Caco-2 (cell line): ENCODE measurements at regions of chr1 and their contacts with region 1.

Region 1: GRCh38 chr1:85580872-85581801 is 576 bp downstream of the CCN1 start:
- DNase-seq: peak; percentile 69 to 81
- H3K4me3 ChIP-seq: peak overlapping the region; percentile 65
- H3K4me3 Mint-ChIP-seq: peak overlapping the region; percentile 83
- H3K27ac Mint-ChIP-seq: peak overlapping the region; percentile 92
- H3K4me1 ChIP-seq: peaks cover 45% of the 10 kb centered on the region
- H3K4me1 Mint-ChIP-seq: peaks cover 28% of the 10 kb centered on the region
- H3K27me3 ChIP-seq: no peaks in the 10 kb centered on the region
- H3K27me3 Mint-ChIP-seq: no peaks in the 10 kb centered on the region
- CTCF ChIP-seq: peak; percentile 46 to 72

Region 2: GRCh38 chr1:85448358-85448757 is 132.8 kb before region 1 on chr1:
- CTCF ChIA-PET with region 1: no interaction called
- POLR2A ChIA-PET with region 1: no interaction called
- intact Hi-C with region 1: no loop called
- DNase-seq: no peak
- H3K4me3 ChIP-seq: no peak overlapping the region
- H3K4me3 Mint-ChIP-seq: no peak overlapping the region
- H3K27ac Mint-ChIP-seq: peak overlapping the region; percentile 18
- H3K4me1 ChIP-seq: no peaks in the 10 kb centered on the region
- H3K4me1 Mint-ChIP-seq: no peaks in the 10 kb centered on the region
- H3K27me3 ChIP-seq: no peaks in the 10 kb centered on the region
- H3K27me3 Mint-ChIP-seq: no peaks in the 10 kb centered on the region
- CTCF ChIP-seq: no peak

Region 3: DNA sequence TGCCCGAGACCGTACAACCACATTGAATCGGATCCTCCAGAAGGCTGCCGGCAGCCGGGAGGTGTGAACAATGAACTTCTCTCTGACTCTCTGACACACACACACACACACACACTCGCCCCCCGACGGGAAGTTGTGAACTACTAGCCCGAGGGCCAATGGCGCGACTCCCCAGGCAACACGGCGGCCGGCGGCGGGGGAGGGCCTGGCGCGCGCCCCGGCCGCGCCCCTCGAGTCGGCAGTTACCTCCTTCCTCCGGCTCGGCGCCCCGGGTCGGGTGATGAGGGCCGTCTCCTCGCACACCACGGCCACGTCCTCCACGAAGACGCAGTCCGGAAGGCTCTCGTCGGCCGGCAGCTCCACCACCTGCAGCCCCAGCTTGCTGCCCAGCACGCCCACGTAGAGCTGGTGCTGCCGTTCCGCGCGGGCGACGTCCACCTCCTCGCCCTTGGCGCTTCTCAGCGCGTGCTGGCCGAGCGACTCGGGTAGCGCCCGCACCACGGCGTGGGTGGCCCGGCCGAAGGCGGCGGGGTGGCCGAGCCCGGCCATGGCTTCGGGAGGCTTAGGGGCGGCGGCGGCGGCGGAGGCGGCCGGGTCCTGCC is 116.5 kb before region 1 on chr1:
- CTCF ChIA-PET with region 1: interaction called, 3 read pairs
- POLR2A ChIA-PET with region 1: interaction called, 6 read pairs
- intact Hi-C with region 1: loop called (anchors 2 kb)
- DNase-seq: peak; percentile 59 to 66
- H3K4me3 ChIP-seq: peak overlapping the region; percentile 88
- H3K4me3 Mint-ChIP-seq: peak overlapping the region; percentile 88
- H3K27ac Mint-ChIP-seq: peak overlapping the region; percentile 84
- H3K4me1 ChIP-seq: peaks cover 38% of the 10 kb centered on the region
- H3K4me1 Mint-ChIP-seq: peaks cover 24% of the 10 kb centered on the region
- H3K27me3 ChIP-seq: no peaks in the 10 kb centered on the region; the same call in 1 of the 2 replicates
- H3K27me3 Mint-ChIP-seq: no peaks in the 10 kb centered on the region
- CTCF ChIP-seq: no peak

Region 4: GRCh38 chr1:85544689-85545215 is 36.4 kb before region 1 on chr1:
- CTCF ChIA-PET with region 1: interaction called, 3 read pairs
- POLR2A ChIA-PET with region 1: interaction called, 5 read pairs
- intact Hi-C with region 1: loop called (anchors 1 kb)
- DNase-seq: peak; percentile 62 to 67
- H3K4me3 ChIP-seq: no peak overlapping the region
- H3K4me3 Mint-ChIP-seq: peak overlapping the region; percentile 50
- H3K27ac Mint-ChIP-seq: peak overlapping the region; percentile 94
- H3K4me1 ChIP-seq: peaks cover 28% of the 10 kb centered on the region
- H3K4me1 Mint-ChIP-seq: peaks cover 15% of the 10 kb centered on the region
- H3K27me3 ChIP-seq: no peaks in the 10 kb centered on the region
- H3K27me3 Mint-ChIP-seq: no peaks in the 10 kb centered on the region
- CTCF ChIP-seq: no peak

Region 5: DNA sequence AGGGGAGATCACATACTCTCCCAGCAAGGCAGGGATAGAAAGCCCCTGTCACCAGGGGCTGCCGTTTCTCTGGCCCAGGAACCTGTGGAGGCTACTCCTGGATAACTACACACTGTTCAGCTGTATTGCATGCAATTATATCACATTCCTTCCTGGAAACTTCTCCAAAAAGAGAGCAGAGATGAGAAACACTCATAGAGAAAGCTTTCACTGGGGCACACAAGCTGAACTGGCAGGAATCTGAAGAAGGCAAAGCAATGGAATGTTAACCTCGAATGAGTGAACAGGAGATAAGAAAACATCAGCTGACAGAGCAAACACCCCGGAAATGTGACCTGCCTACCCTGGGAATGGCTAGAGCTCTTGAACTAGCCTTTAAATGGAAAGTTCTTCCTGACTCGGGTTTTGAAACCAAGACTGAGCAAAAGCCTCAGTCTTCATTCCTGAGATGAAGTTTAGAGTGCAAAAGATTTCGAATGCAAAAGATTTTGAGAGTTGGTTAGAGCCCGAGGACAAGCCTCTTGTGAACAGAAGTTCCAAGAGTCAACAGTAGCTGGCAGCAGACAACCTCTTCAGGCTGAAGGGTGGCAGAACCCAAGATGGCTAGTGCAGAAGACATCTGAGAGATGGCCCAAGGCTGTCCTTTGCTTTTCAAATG is 31.7 kb after region 1 on chr1:
- CTCF ChIA-PET with region 1: interaction called, 11 read pairs
- POLR2A ChIA-PET with region 1: interaction called, 17 read pairs
- intact Hi-C with region 1: loop called (anchors 1 kb)
- DNase-seq: peak; percentile 60 to 69
- H3K4me3 ChIP-seq: no peak overlapping the region
- H3K4me3 Mint-ChIP-seq: peak overlapping the region; percentile 70
- H3K27ac Mint-ChIP-seq: peak overlapping the region; percentile 96
- H3K4me1 ChIP-seq: peaks cover 47% of the 10 kb centered on the region
- H3K4me1 Mint-ChIP-seq: peaks cover 47% of the 10 kb centered on the region
- H3K27me3 ChIP-seq: no peaks in the 10 kb centered on the region
- H3K27me3 Mint-ChIP-seq: no peaks in the 10 kb centered on the region
- CTCF ChIP-seq: peak; percentile 35 to 41

Region 6: DNA sequence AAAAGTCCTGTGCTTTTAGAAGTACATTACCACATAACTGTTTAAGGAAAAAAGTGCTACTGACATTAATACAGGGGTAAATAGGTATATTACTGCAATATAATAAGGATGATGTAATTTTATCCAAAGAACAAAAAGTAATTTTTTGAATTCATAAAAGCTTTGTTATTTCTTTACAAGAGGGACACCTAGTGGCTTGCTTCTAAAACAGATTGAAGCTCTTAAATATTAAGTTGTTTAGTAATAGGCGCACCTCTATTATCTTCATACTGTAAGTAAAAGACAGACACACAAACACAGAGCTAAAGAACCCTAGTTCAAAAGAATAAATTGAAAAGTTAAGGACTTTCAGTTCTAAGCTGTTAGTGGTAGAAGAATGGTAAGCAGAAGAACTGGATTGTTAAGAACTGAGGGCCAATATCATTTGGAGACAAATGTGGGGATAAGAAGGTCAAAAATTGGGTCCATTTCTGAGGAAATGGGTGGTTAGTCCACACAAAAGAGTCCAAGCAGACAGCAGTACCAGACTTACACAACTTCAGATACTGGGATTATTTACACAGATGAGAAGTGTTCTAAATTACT is 111.7 kb after region 1 on chr1:
- CTCF ChIA-PET with region 1: interaction called, 4 read pairs
- POLR2A ChIA-PET with region 1: no interaction called
- intact Hi-C with region 1: loop called (anchors 5 kb)
- DNase-seq: no peak
- H3K4me3 ChIP-seq: no peak overlapping the region
- H3K4me3 Mint-ChIP-seq: no peak overlapping the region
- H3K27ac Mint-ChIP-seq: no peak overlapping the region
- H3K4me1 ChIP-seq: no peaks in the 10 kb centered on the region
- H3K4me1 Mint-ChIP-seq: no peaks in the 10 kb centered on the region
- H3K27me3 ChIP-seq: no peaks in the 10 kb centered on the region
- H3K27me3 Mint-ChIP-seq: no peaks in the 10 kb centered on the region
- CTCF ChIP-seq: peak in 1 of 2 experiments; percentile 7

Region 7: GRCh38 chr1:85734931-85735330 is 153.8 kb after region 1 on chr1:
- CTCF ChIA-PET with region 1: no interaction called
- POLR2A ChIA-PET with region 1: no interaction called
- intact Hi-C with region 1: no loop called
- DNase-seq: no peak
- H3K4me3 ChIP-seq: no peak overlapping the region
- H3K4me3 Mint-ChIP-seq: no peak overlapping the region
- H3K27ac Mint-ChIP-seq: no peak overlapping the region
- H3K4me1 ChIP-seq: no peaks in the 10 kb centered on the region
- H3K4me1 Mint-ChIP-seq: no peaks in the 10 kb centered on the region
- H3K27me3 ChIP-seq: no peaks in the 10 kb centered on the region
- H3K27me3 Mint-ChIP-seq: no peaks in the 10 kb centered on the region
- CTCF ChIP-seq: no peak